ENCODE measurements at regions of chr14 and their contacts with region 1.

Region 1: DNA sequence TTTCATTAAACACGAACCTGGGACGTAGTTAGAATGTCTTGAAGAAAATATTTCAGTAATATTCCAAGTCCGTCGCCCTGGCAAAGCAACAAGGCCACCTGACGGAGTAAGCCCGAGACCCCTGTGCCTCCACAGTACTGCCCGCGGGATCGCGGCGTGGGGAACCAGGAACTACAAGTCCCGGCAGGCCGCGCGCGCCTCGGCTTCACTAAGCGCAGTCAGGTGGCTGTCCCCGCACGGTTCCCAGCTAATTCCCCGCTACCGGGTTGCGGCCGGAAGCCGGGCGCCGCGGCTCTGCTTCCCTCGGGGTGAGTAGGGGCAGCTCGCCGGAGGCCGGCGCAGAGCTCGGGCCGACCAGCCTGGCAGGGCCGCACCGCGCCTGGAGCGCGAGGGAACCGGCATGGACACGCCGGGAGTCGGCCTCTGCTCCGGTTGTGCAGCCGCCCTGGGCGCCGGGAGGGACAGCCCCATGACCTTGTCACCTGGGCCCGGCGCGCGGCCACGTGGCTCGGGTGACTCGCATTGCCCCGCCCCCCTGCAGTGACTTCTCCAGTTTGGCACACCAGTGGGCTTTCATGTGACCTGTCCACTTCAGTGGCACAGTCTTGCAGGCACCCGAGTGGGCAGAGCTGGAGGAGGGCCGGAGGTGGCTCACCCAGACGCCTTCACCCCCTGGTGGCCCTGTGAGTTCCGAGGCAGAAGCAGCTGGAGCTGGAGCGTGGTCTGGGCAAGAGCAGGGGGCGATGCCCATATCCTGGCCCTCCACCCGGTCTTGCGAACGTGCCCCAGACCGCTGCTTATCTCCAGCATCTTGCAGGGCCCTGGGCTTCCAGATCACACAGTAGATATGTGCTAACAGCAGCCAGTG is at the start of gene ADCK1:
- DNase-seq: peak; percentile 91
- H3K4me3 ChIP-seq: peak within 1 kb of the TSS; percentile 76
- H3K27ac ChIP-seq: peak within 1 kb of the TSS; percentile 32
- H3K4me1 ChIP-seq: peaks cover 30% of the 10 kb centered on the region
- CTCF ChIP-seq: peak; percentile 33; the same call in 1 of the 2 replicates
- total RNA-seq, gene ADCK1: 5.9 and 7.5 TPM in 2 replicates

Region 2: GRCh38 chr14:77707724-77708408 is 92.2 kb before region 1 on chr14 and contains the starts of genes ALKBH1 and SLIRP:
- CTCF ChIA-PET with region 1: no interaction called
- POLR2A ChIA-PET with region 1: interaction called, 3 read pairs
- intact Hi-C with region 1: loop called (anchors 5 kb)
- DNase-seq: peak; percentile 87
- H3K4me3 ChIP-seq: peak within 1 kb of the TSS; percentile 85
- H3K27ac ChIP-seq: peak within 1 kb of the TSS; percentile 41
- H3K4me1 ChIP-seq: peaks cover 31% of the 10 kb centered on the region
- CTCF ChIP-seq: no peak
- total RNA-seq, gene ALKBH1: 10.0 and 12.6 TPM in 2 replicates
- total RNA-seq, gene SLIRP: 147 and 252 TPM in 2 replicates

Region 3: GRCh38 chr14:77760381-77761246 is 39.5 kb before region 1 on chr14 and contains the start of gene SNW1:
- CTCF ChIA-PET with region 1: no interaction called
- POLR2A ChIA-PET with region 1: interaction called, 9 read pairs
- intact Hi-C with region 1: loop called (anchors 2 kb)
- DNase-seq: peak; percentile 96
- H3K4me3 ChIP-seq: peak within 1 kb of the TSS; percentile 92
- H3K27ac ChIP-seq: peak within 1 kb of the TSS; percentile 68
- H3K4me1 ChIP-seq: peaks cover 22% of the 10 kb centered on the region
- CTCF ChIP-seq: 0 out of 2 replicates have a peak, but pooled peaks have one; percentile 16
- total RNA-seq, gene SNW1: 64.7 and 81.0 TPM in 2 replicates

Region 4: GRCh38 chr14:77848031-77848430 is 47.9 kb after region 1 on chr14:
- CTCF ChIA-PET with region 1: no interaction called
- POLR2A ChIA-PET with region 1: no interaction called
- intact Hi-C with region 1: no loop called
- DNase-seq: no peak
- H3K4me3 ChIP-seq: no peak overlapping the region
- H3K27ac ChIP-seq: no peak overlapping the region
- H3K4me1 ChIP-seq: no peaks in the 10 kb centered on the region
- CTCF ChIP-seq: no peak

Region 5: DNA sequence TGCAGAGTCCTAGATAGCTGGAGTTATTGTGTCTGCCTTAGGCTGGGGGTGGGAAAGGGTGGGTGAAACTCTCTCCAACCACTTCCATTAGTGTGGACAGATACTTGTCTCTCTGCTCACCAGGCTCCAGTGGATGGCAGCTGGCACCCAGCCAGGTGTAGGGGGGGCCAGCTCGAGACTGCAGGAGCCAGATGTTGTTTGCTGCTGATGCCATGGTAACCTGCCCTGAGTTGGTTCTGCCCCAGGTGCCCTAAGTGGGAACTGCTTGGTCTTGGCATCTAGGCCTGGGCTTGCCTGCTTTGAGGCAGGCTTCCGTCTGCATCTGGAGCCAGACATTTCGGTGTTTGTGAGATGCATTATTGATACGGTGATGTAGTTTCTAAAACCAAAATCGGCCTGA is 82.0 kb after region 1 on chr14:
- CTCF ChIA-PET with region 1: no interaction called
- POLR2A ChIA-PET with region 1: no interaction called
- intact Hi-C with region 1: no loop called
- DNase-seq: no peak
- H3K4me3 ChIP-seq: no peak overlapping the region
- H3K27ac ChIP-seq: no peak overlapping the region
- H3K4me1 ChIP-seq: no peaks in the 10 kb centered on the region
- CTCF ChIP-seq: no peak

Measured in OCI-LY7 (cell line).